ENCODE measurements at regions of chr2 and their contacts with region 1.

Region 1: DNA sequence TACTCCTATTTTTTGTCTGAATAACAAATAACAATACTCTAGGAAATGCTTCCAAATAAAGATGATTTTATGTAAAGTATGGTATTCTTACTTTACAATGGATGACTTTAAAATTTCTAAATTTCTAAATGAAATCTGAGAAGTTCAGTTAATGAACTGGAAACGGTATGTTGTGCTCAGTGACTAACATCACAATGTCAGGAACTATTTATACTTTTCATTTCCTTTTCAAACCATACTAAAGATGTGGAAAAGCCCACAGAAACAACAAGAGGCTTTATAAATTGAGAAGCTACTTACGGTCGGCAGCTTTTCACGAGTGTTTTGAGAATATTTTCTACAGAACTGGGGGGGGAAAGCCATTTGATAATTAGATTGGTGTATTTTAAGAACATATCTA is 31.1 kb downstream of the PSME4 start:
- DNase-seq: no peak
- H3K4me3 ChIP-seq: no peak overlapping the region
- H3K4me3 Mint-ChIP-seq: no peak overlapping the region
- H3K27ac ChIP-seq: no peak overlapping the region
- H3K27ac Mint-ChIP-seq: no peak overlapping the region
- H3K4me1 ChIP-seq: no peaks in the 10 kb centered on the region
- H3K4me1 Mint-ChIP-seq: no peaks in the 10 kb centered on the region
- H3K27me3 ChIP-seq: no peaks in the 10 kb centered on the region
- H3K27me3 Mint-ChIP-seq: no peaks in the 10 kb centered on the region
- CTCF ChIP-seq: no peak

Region 2: GRCh38 chr2:53767405-53768241 is 172.0 kb before region 1 on chr2 and contains the start of gene CHAC2:
- intact Hi-C with region 1: no loop called
- DNase-seq: peak; percentile 64 to 73 (median 68)
- H3K4me3 ChIP-seq: peak within 1 kb of the TSS; percentile 74 to 95 (median 81)
- H3K4me3 Mint-ChIP-seq: peak within 1 kb of the TSS; percentile 89 to 95
- H3K27ac ChIP-seq: peak within 1 kb of the TSS; percentile 42 to 78
- H3K27ac Mint-ChIP-seq: peak within 1 kb of the TSS; percentile 60 to 91 (median 82)
- H3K4me1 ChIP-seq: peaks cover 8 to 17% of the 10 kb centered on the region in 2 donors
- H3K4me1 Mint-ChIP-seq: peaks cover 12% of the 10 kb centered on the region
- H3K27me3 ChIP-seq: no peaks in the 10 kb centered on the region
- H3K27me3 Mint-ChIP-seq: no peaks in the 10 kb centered on the region
- CTCF ChIP-seq: peak; percentile 28
- polyA plus RNA-seq, gene CHAC2: 0.07 to 0.40 (median 0.20) TPM

Region 3: DNA sequence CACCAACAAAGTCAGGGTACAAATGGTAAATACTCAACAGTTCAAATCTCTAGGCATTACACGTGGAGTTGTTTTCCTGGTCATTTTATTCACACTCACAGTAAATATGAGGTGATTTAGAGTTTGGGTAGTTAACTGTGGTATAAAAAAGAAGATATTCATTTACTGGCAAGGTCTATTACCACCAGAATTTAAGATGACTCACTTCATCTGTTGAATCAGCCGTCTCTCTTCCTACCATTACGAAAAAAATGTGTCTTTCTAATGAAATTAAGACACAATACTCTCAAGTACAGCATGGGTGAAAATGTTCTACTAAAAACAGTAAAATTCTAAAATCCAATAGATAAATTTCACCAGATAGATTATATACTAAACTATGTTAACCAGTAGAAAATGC is 58.9 kb before region 1 on chr2:
- intact Hi-C with region 1: loop called in 1 of 2 experiments (anchors 10 kb)
- DNase-seq: no peak
- H3K4me3 ChIP-seq: no peak overlapping the region
- H3K4me3 Mint-ChIP-seq: no peak overlapping the region
- H3K27ac ChIP-seq: no peak overlapping the region
- H3K27ac Mint-ChIP-seq: no peak overlapping the region
- H3K4me1 ChIP-seq: no peaks in the 10 kb centered on the region
- H3K4me1 Mint-ChIP-seq: no peaks in the 10 kb centered on the region
- H3K27me3 ChIP-seq: no peaks in the 10 kb centered on the region
- H3K27me3 Mint-ChIP-seq: no peaks in the 10 kb centered on the region
- CTCF ChIP-seq: no peak